Caco-2 (cell line): ENCODE measurements at regions of chr18 and their contacts with region 1.

Region 1: GRCh38 chr18:3245853-3246634 is 1.6 kb upstream of the MYL12A start:
- DNase-seq: peak; percentile 88 to 89
- H3K4me3 ChIP-seq: peak overlapping the region; percentile 47
- H3K4me3 Mint-ChIP-seq: peak overlapping the region; percentile 78
- H3K27ac Mint-ChIP-seq: peak overlapping the region; percentile 98
- H3K4me1 ChIP-seq: peaks cover 12% of the 10 kb centered on the region
- H3K4me1 Mint-ChIP-seq: peaks cover 22% of the 10 kb centered on the region
- H3K27me3 ChIP-seq: no peaks in the 10 kb centered on the region
- H3K27me3 Mint-ChIP-seq: no peaks in the 10 kb centered on the region
- CTCF ChIP-seq: peak; percentile 90 to 91

Region 2: DNA sequence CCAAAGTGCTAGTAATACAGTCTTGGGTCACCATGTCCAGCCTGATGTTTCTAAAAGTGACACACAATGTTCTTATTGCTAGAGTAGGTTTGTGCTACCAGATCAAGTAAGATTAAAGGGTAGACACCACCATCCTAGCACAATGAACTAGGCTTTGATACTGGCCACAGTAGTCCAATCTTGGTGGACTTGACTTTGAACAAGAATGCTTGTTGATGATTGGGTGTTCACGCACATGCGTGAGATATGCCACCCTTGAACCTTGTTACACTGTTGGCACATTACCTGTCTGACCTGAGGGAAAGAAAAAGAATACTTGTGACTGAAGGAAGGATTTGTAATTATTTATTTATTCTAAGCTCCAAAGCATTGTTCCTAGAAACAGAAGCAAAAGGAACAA is 471.4 kb before region 1 on chr18:
- CTCF ChIA-PET with region 1: no interaction called
- POLR2A ChIA-PET with region 1: no interaction called
- intact Hi-C with region 1: loop called (anchors 5 kb)
- DNase-seq: no peak
- H3K4me3 ChIP-seq: no peak overlapping the region
- H3K4me3 Mint-ChIP-seq: no peak overlapping the region
- H3K27ac Mint-ChIP-seq: no peak overlapping the region
- H3K4me1 ChIP-seq: no peaks in the 10 kb centered on the region
- H3K4me1 Mint-ChIP-seq: no peaks in the 10 kb centered on the region
- H3K27me3 ChIP-seq: no peaks in the 10 kb centered on the region
- H3K27me3 Mint-ChIP-seq: no peaks in the 10 kb centered on the region
- CTCF ChIP-seq: no peak

Region 3: DNA sequence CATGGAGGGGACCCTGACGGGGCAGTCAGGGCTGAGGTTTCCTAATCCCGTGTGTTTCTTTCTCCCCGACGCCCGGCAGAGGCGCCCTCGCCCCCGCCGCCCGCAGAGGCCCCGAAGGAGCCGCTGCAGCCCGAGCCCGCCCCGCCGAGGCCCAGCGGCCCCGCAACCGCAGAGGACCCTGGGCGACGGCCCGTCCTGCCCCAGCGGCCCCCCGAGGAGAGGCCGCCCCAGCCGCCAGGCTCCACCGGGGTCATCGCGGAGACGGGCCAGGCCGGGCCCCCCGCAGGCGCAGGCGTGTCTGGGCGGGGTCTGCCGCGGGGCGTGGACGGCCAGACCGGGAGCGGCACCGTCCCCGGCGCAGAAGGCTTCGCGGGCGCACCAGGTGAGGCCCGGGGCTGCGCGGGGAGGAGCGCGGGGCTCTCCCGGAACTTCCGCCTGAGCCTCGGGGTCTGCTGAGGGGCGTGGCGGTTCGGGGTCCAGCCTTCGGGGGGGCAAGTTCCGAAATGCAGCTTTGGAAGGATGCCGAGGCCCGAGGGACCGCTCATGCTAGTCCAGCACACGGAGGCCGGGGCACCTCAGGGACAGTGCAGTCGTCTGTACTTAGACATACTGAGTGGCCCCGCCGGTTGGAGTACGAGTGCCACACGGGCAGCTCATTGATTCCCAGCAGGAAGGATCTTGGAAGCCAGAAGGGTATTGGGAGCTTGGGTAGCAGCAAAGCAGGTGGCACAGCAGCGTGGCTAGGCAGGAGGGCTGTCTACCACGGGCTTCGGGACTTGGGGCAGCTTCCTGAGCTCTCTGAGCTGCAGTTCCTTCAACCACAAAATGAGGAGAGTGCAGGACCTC is 339.1 kb before region 1 on chr18:
- CTCF ChIA-PET with region 1: no interaction called
- POLR2A ChIA-PET with region 1: no interaction called
- intact Hi-C with region 1: no loop called
- DNase-seq: peak in 1 of 2 experiments; percentile 73
- H3K4me3 ChIP-seq: peak overlapping the region; percentile 84
- H3K4me3 Mint-ChIP-seq: peak overlapping the region; percentile 81
- H3K27ac Mint-ChIP-seq: no peak overlapping the region
- H3K4me1 ChIP-seq: peaks cover 7% of the 10 kb centered on the region; the same call in 1 of the 2 replicates
- H3K4me1 Mint-ChIP-seq: peaks cover 8% of the 10 kb centered on the region
- H3K27me3 ChIP-seq: no peaks in the 10 kb centered on the region
- H3K27me3 Mint-ChIP-seq: no peaks in the 10 kb centered on the region
- CTCF ChIP-seq: peak in 1 of 2 experiments; percentile 49

Region 4: GRCh38 chr18:2932247-2933181 is 313.5 kb before region 1 on chr18:
- CTCF ChIA-PET with region 1: interaction called, 4 read pairs
- POLR2A ChIA-PET with region 1: interaction called, 3 read pairs
- intact Hi-C with region 1: loop called (anchors 1 kb)
- DNase-seq: peak in 1 of 2 experiments; percentile 68
- H3K4me3 ChIP-seq: no peak overlapping the region
- H3K4me3 Mint-ChIP-seq: no peak overlapping the region
- H3K27ac Mint-ChIP-seq: no peak overlapping the region
- H3K4me1 ChIP-seq: no peaks in the 10 kb centered on the region
- H3K4me1 Mint-ChIP-seq: peaks cover 6% of the 10 kb centered on the region
- H3K27me3 ChIP-seq: no peaks in the 10 kb centered on the region
- H3K27me3 Mint-ChIP-seq: no peaks in the 10 kb centered on the region
- CTCF ChIP-seq: peak; percentile 73 to 75

Region 5: GRCh38 chr18:2994603-2995432 is 251.2 kb before region 1 on chr18:
- CTCF ChIA-PET with region 1: interaction called, 8 read pairs
- POLR2A ChIA-PET with region 1: no interaction called
- intact Hi-C with region 1: loop called (anchors 2 kb)
- DNase-seq: peak; percentile 47 to 61
- H3K4me3 ChIP-seq: no peak overlapping the region
- H3K4me3 Mint-ChIP-seq: no peak overlapping the region
- H3K27ac Mint-ChIP-seq: peak overlapping the region; percentile 47
- H3K4me1 ChIP-seq: peaks cover 14% of the 10 kb centered on the region
- H3K4me1 Mint-ChIP-seq: peaks cover 17% of the 10 kb centered on the region
- H3K27me3 ChIP-seq: no peaks in the 10 kb centered on the region
- H3K27me3 Mint-ChIP-seq: no peaks in the 10 kb centered on the region
- CTCF ChIP-seq: peak; percentile 52 to 65

Region 6: GRCh38 chr18:3151399-3152264 is 94.4 kb before region 1 on chr18:
- CTCF ChIA-PET with region 1: interaction called, 16 read pairs
- POLR2A ChIA-PET with region 1: no interaction called
- intact Hi-C with region 1: loop called (anchors 1 kb)
- DNase-seq: peak in 1 of 2 experiments; percentile 32
- H3K4me3 ChIP-seq: no peak overlapping the region
- H3K4me3 Mint-ChIP-seq: peak overlapping the region; percentile 61
- H3K27ac Mint-ChIP-seq: no peak overlapping the region
- H3K4me1 ChIP-seq: no peaks in the 10 kb centered on the region
- H3K4me1 Mint-ChIP-seq: no peaks in the 10 kb centered on the region
- H3K27me3 ChIP-seq: no peaks in the 10 kb centered on the region
- H3K27me3 Mint-ChIP-seq: no peaks in the 10 kb centered on the region
- CTCF ChIP-seq: peak; percentile 79 to 88

Region 7: DNA sequence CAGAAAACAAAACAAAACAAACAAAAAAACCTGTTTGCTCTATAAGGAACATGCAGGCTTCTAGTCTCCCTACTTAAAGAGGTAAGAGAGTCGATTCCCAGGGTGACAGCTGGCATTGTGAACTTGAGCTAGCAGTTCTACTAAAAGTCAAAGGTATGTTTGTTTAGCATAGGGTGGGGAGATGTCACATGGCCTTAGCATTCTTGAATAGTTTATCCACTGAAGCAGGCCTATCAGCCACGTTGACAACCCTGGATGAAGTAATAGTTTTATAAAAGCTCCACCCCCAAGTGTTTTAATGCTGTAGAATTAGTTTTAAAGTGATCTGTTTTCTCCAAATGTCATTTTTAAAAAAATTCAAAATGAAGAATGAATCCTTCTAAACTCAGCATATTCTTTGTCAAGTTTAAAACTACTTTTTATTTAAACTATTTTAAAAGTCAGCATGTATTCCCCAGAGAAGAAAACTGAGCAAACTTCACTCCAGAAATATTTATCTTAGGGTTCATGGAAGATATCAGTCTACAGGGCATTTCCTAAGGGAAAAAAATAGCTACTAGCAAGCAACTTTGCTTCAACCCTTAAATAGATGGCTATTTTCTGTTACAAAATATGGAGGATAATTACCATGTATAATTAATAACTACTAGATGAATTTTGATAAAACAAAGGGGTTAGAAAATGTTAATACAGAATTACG is 27.9 kb before region 1 on chr18:
- CTCF ChIA-PET with region 1: interaction called, 3 read pairs
- POLR2A ChIA-PET with region 1: interaction called, 4 read pairs
- intact Hi-C with region 1: loop called (anchors 1 kb)
- DNase-seq: peak; percentile 67
- H3K4me3 ChIP-seq: no peak overlapping the region
- H3K4me3 Mint-ChIP-seq: peak overlapping the region; percentile 22
- H3K27ac Mint-ChIP-seq: peak overlapping the region; percentile 37
- H3K4me1 ChIP-seq: peaks cover 29% of the 10 kb centered on the region
- H3K4me1 Mint-ChIP-seq: peaks cover 28% of the 10 kb centered on the region
- H3K27me3 ChIP-seq: no peaks in the 10 kb centered on the region
- H3K27me3 Mint-ChIP-seq: no peaks in the 10 kb centered on the region
- CTCF ChIP-seq: no peak